ENCODE measurements at regions of chr7 and their contacts with region 1.

Region 1: DNA sequence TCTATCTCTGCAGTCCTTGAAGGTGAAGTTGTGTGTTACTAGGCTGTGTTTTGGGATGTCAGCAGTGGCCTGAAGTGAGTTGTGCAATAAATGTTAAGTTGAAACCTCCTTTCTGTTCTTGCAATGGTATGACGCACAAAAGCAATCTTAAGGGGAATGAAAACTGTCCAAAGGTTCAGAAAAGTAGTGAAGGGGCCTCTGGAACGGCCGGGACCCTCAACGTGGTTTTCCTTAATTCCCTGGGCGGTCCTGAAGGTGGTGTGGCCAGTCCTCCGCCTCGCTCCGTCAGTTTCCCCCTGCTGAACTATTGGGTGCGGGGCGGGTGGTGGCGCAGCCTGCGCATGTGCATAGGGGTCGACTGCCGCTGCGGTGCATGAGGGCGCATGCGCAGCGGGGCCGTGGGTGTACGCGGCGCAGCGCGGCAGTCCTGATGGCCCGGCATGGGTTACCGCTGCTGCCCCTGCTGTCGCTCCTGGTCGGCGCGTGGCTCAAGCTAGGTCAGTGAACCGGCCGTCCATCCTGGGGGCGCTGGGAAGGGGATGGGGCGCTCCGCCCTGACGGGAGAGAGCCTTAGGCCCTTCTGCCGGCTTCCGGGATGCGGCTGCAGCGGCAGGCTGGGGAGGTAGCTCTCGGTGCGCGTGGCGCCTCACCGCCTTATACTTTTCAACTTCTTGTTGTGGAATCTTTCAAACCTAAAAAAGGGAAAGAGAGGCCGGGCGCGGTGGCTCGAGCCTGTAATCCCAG is at the start of gene SUMF2:
- DNase-seq: peak; percentile 81 to 97 (median 92)
- ATAC-seq: peak; percentile 90 to 93
- H3K4me3 Mint-ChIP-seq: peak within 1 kb of the TSS; percentile 90 to 96 (median 94)
- H3K27ac Mint-ChIP-seq: peak within 1 kb of the TSS; percentile 95 to 99 (median 98)
- H3K4me1 Mint-ChIP-seq: peaks cover 15 to 35% (median 33%) of the 10 kb centered on the region in 4 donors
- H3K27me3 Mint-ChIP-seq: peaks cover 0 to 3% (median 0%) of the 10 kb centered on the region in 5 donors
- polyA plus RNA-seq, gene SUMF2: 135 to 171 (median 140) TPM

Region 2: GRCh38 chr7:55641273-55641691 is 422.8 kb before region 1 on chr7:
- POLR2A ChIA-PET with region 1: interaction called, 13 read pairs
- DNase-seq: peak in 7 of 10 donors; percentile 11 to 67 (median 37)
- ATAC-seq: peak; percentile 80 to 86
- H3K4me3 Mint-ChIP-seq: peak overlapping the region in 1 of 10 donors; percentile 38
- H3K27ac Mint-ChIP-seq: no peak overlapping the region
- H3K4me1 Mint-ChIP-seq: peaks cover 1 to 12% (median 9%) of the 10 kb centered on the region in 4 donors
- H3K27me3 Mint-ChIP-seq: peaks cover 0 to 3% (median 1%) of the 10 kb centered on the region in 5 donors

Region 3: GRCh38 chr7:55964261-55965099 is 99.6 kb before region 1 on chr7 and contains the start of gene NIPSNAP2:
- POLR2A ChIA-PET with region 1: interaction called, 11 read pairs
- DNase-seq: peak; percentile 30 to 81 (median 65)
- ATAC-seq: peak; percentile 88 to 90
- H3K4me3 Mint-ChIP-seq: peak within 1 kb of the TSS; percentile 66 to 92 (median 87)
- H3K27ac Mint-ChIP-seq: peak within 1 kb of the TSS; percentile 84 to 95 (median 92)
- H3K4me1 Mint-ChIP-seq: peaks cover 25 to 49% (median 45%) of the 10 kb centered on the region in 4 donors
- H3K27me3 Mint-ChIP-seq: no peaks in the 10 kb centered on the region
- polyA plus RNA-seq, gene NIPSNAP2: 36.3 to 47.9 (median 40.3) TPM

Region 4: DNA sequence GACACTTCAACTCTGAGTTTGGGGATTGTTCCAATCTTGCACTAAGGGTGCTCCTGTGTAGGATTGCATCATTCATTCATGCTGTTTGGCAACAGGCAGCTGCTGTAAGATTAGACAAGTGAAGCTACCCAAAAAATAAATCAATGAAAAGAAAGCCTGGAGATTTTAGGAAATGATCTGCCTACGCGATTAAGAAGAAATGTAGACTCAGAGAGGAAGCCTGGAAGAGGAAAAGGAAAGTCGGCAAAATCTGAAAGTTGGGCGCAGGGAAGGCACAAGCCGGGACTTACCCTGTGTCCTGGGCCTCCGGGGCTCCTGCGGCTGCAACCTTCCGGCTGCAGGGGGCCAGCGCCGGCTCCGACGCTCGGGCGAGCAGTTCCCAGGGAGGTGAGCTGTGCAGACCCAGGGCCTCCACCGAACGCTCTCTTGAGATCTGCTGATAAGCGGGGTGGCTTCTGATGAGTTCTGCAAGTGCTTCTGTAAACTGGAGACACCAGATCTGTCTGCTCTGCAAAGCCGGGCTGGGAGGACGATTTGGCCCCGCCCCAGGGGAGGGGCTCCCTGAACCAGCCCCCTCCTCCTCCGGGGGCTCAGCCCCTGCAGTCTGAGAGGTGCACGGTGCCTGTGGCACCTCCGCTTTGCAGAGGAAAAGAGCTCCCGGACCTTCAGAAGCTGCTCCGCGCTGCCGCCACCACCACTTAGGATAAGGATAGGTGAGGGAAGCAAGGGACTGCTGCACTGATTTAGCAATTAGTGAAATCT is 30.2 kb before region 1 on chr7:
- POLR2A ChIA-PET with region 1: interaction called, 17 read pairs
- DNase-seq: peak; percentile 58 to 87 (median 77)
- ATAC-seq: peak; percentile 96 to 98
- H3K4me3 Mint-ChIP-seq: peak overlapping the region; percentile 82 to 91 (median 88)
- H3K27ac Mint-ChIP-seq: peak overlapping the region in 9 of 10 donors; percentile 55 to 87 (median 77)
- H3K4me1 Mint-ChIP-seq: peaks cover 4 to 15% (median 12%) of the 10 kb centered on the region in 4 donors
- H3K27me3 Mint-ChIP-seq: no peaks in the 10 kb centered on the region

Region 5: GRCh38 chr7:56051339-56052191 is 12.5 kb before region 1 on chr7 and contains the starts of genes CCT6A and PSPH:
- POLR2A ChIA-PET with region 1: interaction called, 42 read pairs
- DNase-seq: peak; percentile 69 to 91 (median 84)
- ATAC-seq: peak; percentile 85 to 94
- H3K4me3 Mint-ChIP-seq: peak within 1 kb of the TSS; percentile 91 to 99 (median 96)
- H3K27ac Mint-ChIP-seq: peak within 1 kb of the TSS; percentile 82 to 97 (median 96)
- H3K4me1 Mint-ChIP-seq: peaks cover 4 to 44% (median 32%) of the 10 kb centered on the region in 4 donors
- H3K27me3 Mint-ChIP-seq: no peaks in the 10 kb centered on the region
- polyA plus RNA-seq, gene CCT6A: 86.8 to 103 (median 97.5) TPM
- polyA plus RNA-seq, gene PSPH: 5.7 to 8.0 (median 6.9) TPM

Region 6: GRCh38 chr7:56081626-56082340 is 17.7 kb after region 1 on chr7:
- POLR2A ChIA-PET with region 1: no interaction called
- DNase-seq: no peak
- ATAC-seq: no peak
- H3K4me3 Mint-ChIP-seq: no peak overlapping the region
- H3K27ac Mint-ChIP-seq: peak overlapping the region in 3 of 10 donors; percentile 18 to 46 (median 31)
- H3K4me1 Mint-ChIP-seq: peaks cover 0 to 3% (median 2%) of the 10 kb centered on the region in 4 donors
- H3K27me3 Mint-ChIP-seq: no peaks in the 10 kb centered on the region

Region 7: DNA sequence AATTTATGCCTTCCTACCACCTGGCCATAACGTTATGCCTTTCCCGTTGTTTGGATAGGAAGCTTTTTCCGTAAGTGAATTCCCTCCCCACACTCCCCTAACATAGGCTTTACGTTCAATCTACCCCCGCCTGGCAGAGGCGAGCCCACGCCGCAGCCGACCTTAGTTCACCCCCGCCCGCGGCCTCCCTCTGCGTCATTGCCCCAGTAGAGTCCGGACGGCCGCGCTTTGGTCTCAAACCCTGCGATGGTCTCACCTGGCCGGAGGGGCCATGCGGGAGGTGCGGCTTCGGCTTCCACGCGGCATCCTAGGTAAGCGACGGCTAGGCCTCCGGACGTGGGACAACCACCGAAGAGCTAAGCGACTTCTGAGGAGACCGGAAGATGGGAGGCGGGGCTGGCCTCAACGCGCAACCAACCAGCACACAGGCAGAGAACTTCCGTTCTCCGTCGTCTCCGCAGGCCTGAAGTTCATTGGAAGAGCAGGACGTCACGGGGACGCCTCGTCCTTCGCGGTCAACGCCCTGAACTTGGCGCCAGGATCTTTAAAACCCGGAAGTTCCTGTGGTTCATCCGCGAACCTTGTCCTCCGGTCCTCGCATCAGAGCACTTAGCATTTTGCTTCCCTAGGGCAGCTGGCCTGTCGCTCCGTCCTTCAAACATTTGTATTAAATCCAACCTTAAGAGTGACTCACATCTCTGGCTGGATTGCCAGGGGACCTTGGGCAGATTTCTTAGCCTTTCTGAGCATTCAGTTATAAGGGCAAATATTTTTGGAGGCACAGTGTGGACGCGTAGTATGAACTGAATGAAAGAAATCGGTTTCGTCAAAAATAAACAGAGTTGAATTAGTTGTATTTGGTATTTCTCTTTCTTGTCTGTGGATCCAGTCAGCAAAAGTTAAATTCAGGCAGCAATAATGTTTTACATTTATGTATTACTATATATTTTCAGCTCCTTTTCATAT is 42.3 kb after region 1 on chr7 and contains the start of gene CHCHD2:
- POLR2A ChIA-PET with region 1: interaction called, 21 read pairs
- DNase-seq: peak; percentile 79 to 97 (median 92)
- ATAC-seq: peak; percentile 95 to 97
- H3K4me3 Mint-ChIP-seq: peak within 1 kb of the TSS; percentile 92 to 98 (median 96)
- H3K27ac Mint-ChIP-seq: peak within 1 kb of the TSS; percentile 97 to 100 (median 99)
- H3K4me1 Mint-ChIP-seq: peaks cover 11 to 44% (median 37%) of the 10 kb centered on the region in 4 donors
- H3K27me3 Mint-ChIP-seq: peaks cover 0 to 3% (median 0%) of the 10 kb centered on the region in 5 donors
- polyA plus RNA-seq, gene CHCHD2: 415 to 515 (median 454) TPM

Measured in naive thymus-derived CD8-positive, alpha-beta T cell (primary cell).